Activated CD4-positive, alpha-beta T cell treated with anti-CD3 and anti-CD28 coated beads for 36 hours (primary cell): ENCODE measurements at regions of chr7 and their contacts with region 1.

Region 1: DNA sequence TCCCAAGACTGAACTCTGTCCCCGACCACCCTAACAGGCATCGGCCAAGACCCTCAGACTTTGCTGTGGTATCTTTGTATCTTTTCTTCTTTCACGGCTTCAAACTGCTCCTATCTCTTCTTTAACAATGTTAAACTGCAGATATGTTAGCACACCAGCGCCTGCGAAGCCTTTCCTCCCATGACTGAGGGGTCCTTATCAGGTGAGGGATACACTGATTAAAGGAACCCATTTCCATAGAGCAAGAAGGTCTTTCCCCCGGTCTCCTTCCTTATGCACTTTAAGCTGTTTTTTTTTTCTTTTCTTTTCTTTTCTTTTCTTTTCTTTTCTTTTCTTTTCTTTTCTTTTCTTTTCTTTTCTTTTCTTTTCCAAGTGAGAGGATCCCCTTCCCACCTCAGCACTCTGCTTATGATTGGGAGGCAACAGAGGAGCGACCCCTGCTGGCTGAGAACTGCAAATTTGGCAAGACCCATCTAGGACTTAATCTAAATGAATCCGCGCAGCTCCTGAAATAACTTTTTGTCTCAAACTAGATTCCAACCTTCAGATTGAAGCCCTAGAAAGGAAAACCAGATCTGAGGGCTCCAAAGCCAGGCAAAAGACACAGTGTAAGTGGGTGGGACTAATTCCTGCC is 109.9 kb downstream of the ITGB8 start:
- DNase-seq: peak; percentile 51
- ATAC-seq: no peak
- H3K4me3 Mint-ChIP-seq: no peak overlapping the region
- H3K27ac Mint-ChIP-seq: no peak overlapping the region
- H3K4me1 Mint-ChIP-seq: no peaks in the 10 kb centered on the region
- H3K27me3 Mint-ChIP-seq: no peaks in the 10 kb centered on the region

Region 2: DNA sequence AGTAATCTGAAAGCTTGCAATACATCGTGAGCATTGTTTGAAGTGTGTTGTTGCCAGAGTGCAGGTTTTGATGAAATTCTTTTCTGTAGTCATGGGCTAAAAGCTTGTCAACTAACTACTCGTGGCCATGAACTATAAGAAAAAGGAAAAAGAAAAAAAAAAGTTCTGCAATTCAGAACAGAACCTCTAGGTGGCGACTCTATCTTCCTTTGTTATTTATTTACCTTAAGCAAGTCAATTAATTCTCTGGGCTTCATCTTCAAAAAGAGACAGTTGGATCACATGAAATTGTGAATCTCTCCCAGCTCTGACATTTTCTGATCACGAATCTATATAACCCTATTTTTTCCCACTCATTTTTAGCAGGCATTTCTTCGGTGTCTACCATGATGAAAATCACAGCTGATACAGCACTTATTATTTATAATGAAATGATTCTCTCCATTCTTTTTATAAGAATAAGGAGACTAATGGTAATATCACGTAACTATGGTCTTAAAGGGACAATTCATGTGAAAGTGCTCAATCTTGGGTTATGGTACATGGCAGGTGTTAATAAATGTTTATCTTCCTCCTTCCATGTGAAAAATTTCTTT is 686.0 kb before region 1 on chr7:
- CTCF ChIA-PET with region 1: no interaction called
- POLR2A ChIA-PET with region 1: no interaction called
- intact Hi-C with region 1: loop called (anchors 5 to 10 kb)
- DNase-seq: no peak
- ATAC-seq: no peak
- H3K4me3 Mint-ChIP-seq: no peak overlapping the region
- H3K27ac Mint-ChIP-seq: no peak overlapping the region
- H3K4me1 Mint-ChIP-seq: no peaks in the 10 kb centered on the region
- H3K27me3 Mint-ChIP-seq: peaks cover 11% of the 10 kb centered on the region

Region 3: DNA sequence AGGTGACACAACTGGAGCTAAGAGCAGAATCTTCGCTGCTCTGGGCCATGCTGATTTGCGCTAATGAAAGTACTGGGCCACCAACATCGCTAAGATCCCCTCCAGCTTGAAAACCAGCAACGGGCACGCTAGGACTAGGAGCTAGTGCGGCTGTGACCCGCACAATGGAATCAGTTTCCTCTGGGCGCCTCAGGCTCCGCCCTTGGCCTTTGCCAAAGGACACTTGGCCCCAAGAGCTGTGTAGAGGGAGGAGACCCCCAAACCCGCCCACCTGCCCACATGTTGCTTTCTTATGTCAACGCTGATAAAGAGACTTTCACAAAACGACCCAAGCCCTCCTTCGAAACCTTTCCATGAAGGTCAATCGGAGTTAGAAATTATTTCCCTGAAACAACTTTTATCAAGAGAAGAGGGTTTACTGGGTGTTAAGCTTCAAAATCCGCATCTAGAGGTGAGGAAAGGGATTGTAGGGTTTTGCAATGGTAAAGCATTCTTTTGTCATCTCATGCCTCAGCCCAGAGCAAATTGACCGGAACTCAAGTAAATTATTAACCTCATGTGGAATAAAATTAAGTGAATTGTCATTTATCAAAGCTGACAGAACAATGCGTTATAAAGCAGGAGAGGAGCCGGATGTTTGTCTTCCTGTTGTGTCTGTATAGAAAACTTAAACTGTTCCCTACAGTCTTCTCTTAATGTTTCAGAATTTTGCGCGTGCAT is 184.2 kb after region 1 on chr7:
- CTCF ChIA-PET with region 1: no interaction called
- POLR2A ChIA-PET with region 1: no interaction called
- intact Hi-C with region 1: no loop called
- DNase-seq: no peak
- ATAC-seq: no peak
- H3K4me3 Mint-ChIP-seq: no peak overlapping the region
- H3K27ac Mint-ChIP-seq: no peak overlapping the region
- H3K4me1 Mint-ChIP-seq: no peaks in the 10 kb centered on the region
- H3K27me3 Mint-ChIP-seq: peaks cover 2% of the 10 kb centered on the region

Region 4: DNA sequence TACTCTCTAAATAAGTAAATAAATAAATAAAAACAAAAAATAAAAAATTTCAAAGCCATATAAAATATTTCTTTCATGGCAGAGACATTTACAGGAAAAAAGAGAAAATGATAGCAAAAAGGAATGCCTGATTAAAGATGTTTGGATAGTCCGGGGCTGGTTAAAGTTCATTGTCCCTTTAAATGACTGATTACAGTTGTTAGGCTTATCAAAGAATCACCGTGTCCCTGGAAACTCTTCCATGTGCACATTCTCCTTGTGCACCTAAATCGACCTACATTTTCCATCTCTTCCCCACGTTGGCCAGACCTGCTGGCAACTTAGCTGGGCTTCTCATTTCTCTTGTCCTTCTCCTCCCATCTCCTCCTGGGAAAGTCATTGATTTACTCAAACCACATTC is 244.0 kb after region 1 on chr7:
- CTCF ChIA-PET with region 1: no interaction called
- POLR2A ChIA-PET with region 1: no interaction called
- intact Hi-C with region 1: no loop called
- DNase-seq: no peak
- ATAC-seq: no peak
- H3K4me3 Mint-ChIP-seq: no peak overlapping the region
- H3K27ac Mint-ChIP-seq: no peak overlapping the region
- H3K4me1 Mint-ChIP-seq: no peaks in the 10 kb centered on the region
- H3K27me3 Mint-ChIP-seq: peaks cover 10% of the 10 kb centered on the region